SK-N-SH (cell line): ENCODE measurements at regions of chr14 and their contacts with region 1.

Region 1: DNA sequence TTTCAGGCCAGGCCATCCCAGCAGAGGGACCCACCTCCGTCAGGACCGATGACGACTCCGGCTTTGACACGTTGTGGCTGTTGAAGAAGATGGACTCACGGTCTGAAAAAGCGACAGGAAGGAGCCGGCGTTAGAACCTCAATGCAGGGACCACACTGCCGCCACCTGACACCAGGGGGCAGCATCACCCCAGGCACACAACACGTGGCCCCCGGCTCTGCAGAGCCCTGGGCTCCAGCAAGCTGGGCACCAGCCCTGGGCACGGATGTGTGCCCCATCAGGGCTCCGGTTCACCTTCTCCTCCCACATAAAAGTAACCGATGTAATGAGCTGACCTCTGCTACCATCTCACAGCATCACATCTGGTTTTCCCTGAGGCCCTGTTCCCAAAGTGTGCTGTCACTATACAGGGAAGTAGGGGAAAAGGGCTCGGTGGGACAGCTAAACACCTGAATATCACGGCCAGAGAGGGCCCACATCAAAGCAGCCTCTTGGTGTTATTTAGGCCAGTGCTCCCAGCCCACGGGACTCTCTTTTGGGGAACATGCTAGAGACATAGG is 29.0 kb downstream of the CHGA start:
- DNase-seq: peak; percentile 93
- H3K4me3 ChIP-seq: no peak overlapping the region; a peak in 1 of 4 replicates
- H3K27ac ChIP-seq: peak overlapping the region in 1 of 2 experiments; percentile 54; a peak in 1 of 4 replicates
- H3K4me1 ChIP-seq: peaks cover 0 to 49% of the 10 kb centered on the region in 2 experiments; a peak in 1 of 4 replicates
- H3K27me3 ChIP-seq: no peaks in the 10 kb centered on the region
- CTCF ChIP-seq: peak; percentile 92
- EP300 ChIP-seq: no peak
- RAD21 ChIP-seq: peak; percentile 95

Region 2: DNA sequence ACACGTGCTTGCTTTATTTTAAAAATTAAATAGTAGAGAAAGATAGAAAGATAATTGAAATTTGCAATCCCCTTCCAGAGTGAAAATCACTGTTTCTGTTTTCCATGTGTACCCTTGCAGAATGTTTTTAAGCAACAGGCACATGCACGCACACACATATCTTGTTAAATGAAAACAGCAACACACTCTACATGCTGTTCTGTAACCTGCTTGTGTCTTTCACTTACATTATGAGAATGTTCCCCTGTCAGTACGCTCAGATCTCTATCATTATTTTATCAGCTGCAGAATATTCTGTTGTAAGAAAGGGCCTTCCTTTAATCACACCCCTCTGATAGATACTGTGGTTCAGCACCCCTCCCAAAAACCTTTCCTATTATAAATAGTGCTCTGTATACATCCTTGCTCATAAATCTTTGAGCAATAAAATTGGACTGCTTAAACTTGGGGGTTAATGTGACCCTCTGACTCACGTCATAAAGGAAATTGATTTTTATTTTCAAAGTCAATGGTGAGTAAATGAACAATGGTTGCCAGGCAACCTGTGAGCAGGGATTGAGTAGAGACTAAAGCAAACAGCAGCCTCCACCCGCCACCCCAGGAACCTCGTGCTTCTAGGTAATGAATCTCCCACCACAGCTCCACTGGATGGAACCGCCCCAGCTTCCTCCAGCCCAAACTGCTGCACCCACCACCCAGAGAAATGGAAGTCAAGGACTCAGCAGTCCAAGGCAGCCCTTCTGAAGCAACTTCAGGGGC is 61.0 kb before region 1 on chr14:
- CTCF ChIA-PET with region 1: interaction called, 20 read pairs
- POLR2A ChIA-PET with region 1: no interaction called
- DNase-seq: no peak
- H3K4me3 ChIP-seq: no peak overlapping the region
- H3K27ac ChIP-seq: peak overlapping the region in 1 of 2 experiments; percentile 81; a peak in 2 of 4 replicates
- H3K4me1 ChIP-seq: peaks cover 0 to 38% of the 10 kb centered on the region in 2 experiments; a peak in 2 of 4 replicates
- H3K27me3 ChIP-seq: no peaks in the 10 kb centered on the region; the same call in 1 of the 2 replicates
- CTCF ChIP-seq: no peak
- EP300 ChIP-seq: peak in 1 of 2 experiments; percentile 84; a peak in 2 of 4 replicates
- RAD21 ChIP-seq: peak; percentile 34; the same call in 1 of the 2 replicates

Region 3: GRCh38 chr14:92986254-92987147 is 34.5 kb after region 1 on chr14:
- CTCF ChIA-PET with region 1: interaction called, 19 read pairs
- POLR2A ChIA-PET with region 1: no interaction called
- DNase-seq: peak; percentile 69
- H3K4me3 ChIP-seq: no peak overlapping the region
- H3K27ac ChIP-seq: peak overlapping the region; percentile 41 to 97; a peak in 3 of 4 replicates
- H3K4me1 ChIP-seq: peaks cover 0 to 65% of the 10 kb centered on the region in 2 experiments; a peak in 2 of 4 replicates
- H3K27me3 ChIP-seq: no peaks in the 10 kb centered on the region
- CTCF ChIP-seq: no peak
- EP300 ChIP-seq: peak in 1 of 2 experiments; percentile 53; a peak in 1 of 4 replicates
- RAD21 ChIP-seq: no peak

Region 4: GRCh38 chr14:93012951-93013719 is 61.1 kb after region 1 on chr14:
- CTCF ChIA-PET with region 1: interaction called, 14 read pairs
- POLR2A ChIA-PET with region 1: interaction called, 5 read pairs
- DNase-seq: no peak
- H3K4me3 ChIP-seq: no peak overlapping the region
- H3K27ac ChIP-seq: peak overlapping the region in 1 of 2 experiments; percentile 98; a peak in 2 of 4 replicates
- H3K4me1 ChIP-seq: peaks cover 8 to 95% of the 10 kb centered on the region in 2 experiments
- H3K27me3 ChIP-seq: no peaks in the 10 kb centered on the region
- CTCF ChIP-seq: no peak
- EP300 ChIP-seq: no peak
- RAD21 ChIP-seq: no peak

Region 5: GRCh38 chr14:93033983-93034670 is 82.1 kb after region 1 on chr14:
- CTCF ChIA-PET with region 1: interaction called, 10 read pairs
- POLR2A ChIA-PET with region 1: no interaction called
- DNase-seq: peak; percentile 77
- H3K4me3 ChIP-seq: no peak overlapping the region
- H3K27ac ChIP-seq: peak overlapping the region in 1 of 2 experiments; percentile 4; a peak in 1 of 4 replicates
- H3K4me1 ChIP-seq: peaks cover 8 to 55% of the 10 kb centered on the region in 2 experiments; a peak in 3 of 4 replicates
- H3K27me3 ChIP-seq: no peaks in the 10 kb centered on the region
- CTCF ChIP-seq: peak; percentile 50
- EP300 ChIP-seq: no peak
- RAD21 ChIP-seq: peak; percentile 48

Region 6: GRCh38 chr14:93137864-93138263 is 185.9 kb after region 1 on chr14:
- CTCF ChIA-PET with region 1: interaction called, 55 read pairs
- POLR2A ChIA-PET with region 1: no interaction called
- DNase-seq: peak; percentile 46
- H3K4me3 ChIP-seq: no peak overlapping the region
- H3K27ac ChIP-seq: no peak overlapping the region
- H3K4me1 ChIP-seq: no peaks in the 10 kb centered on the region; a peak in 1 of 4 replicates
- H3K27me3 ChIP-seq: no peaks in the 10 kb centered on the region
- CTCF ChIP-seq: no peak
- EP300 ChIP-seq: no peak
- RAD21 ChIP-seq: no peak